Activated naive CD4-positive, alpha-beta T cell treated with anti-CD3 and anti-CD28 coated beads for 36 hours (primary cell): ENCODE measurements at regions of chr1 and their contacts with region 1.

Region 1: GRCh38 chr1:54614024-54614423 is 9.3 kb downstream of the FAM151A start:
- DNase-seq: no peak
- H3K4me3 Mint-ChIP-seq: no peak overlapping the region
- H3K27ac Mint-ChIP-seq: no peak overlapping the region
- H3K4me1 Mint-ChIP-seq: no peaks in the 10 kb centered on the region
- H3K27me3 Mint-ChIP-seq: no peaks in the 10 kb centered on the region

Region 2: DNA sequence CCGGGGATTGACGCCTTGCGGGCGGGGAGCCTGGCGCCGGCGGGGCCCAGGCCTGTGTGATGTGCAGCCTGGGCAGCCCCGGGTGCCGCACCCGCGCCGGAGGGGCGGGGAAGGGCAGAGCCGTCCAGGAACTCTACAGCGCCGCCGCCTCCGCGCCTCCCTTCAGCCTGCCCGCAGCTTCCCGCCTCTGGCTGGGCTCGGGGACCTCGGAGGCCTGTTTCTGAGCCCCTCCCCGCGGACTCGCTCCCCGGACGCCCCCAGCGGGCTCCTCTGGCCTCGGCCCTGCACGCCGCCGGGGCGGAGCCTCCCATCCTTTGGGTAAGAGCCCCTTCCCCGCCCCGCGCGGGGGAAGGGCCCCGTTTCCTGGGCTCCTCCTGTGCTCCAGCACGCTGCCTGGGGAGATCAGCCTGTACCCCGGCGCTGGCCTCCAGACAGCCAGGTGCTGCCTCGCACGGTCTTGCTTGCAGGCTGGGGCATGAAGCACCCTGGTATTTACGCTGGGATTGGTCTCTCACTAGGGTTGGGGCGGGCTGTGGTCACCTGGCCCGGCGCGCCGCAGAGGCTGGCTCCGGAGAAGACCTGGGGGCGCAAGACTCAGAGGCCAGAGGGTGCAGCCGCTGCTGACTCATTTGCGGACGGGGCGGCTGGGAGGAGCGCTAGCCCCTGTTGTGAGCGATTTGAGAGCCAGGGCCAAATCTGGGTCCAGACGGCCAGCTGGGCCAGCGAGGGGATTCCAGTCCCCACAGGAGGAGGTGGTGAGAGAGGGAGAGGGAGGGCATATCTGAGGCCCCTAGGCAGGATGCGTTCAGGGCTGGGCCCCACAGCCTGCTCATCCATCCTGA is 71.7 kb before region 1 on chr1:
- CTCF ChIA-PET with region 1: no interaction called
- intact Hi-C with region 1: loop called (anchors 1 kb)
- DNase-seq: peak; percentile 85
- H3K4me3 Mint-ChIP-seq: peak overlapping the region; percentile 70
- H3K27ac Mint-ChIP-seq: no peak overlapping the region
- H3K4me1 Mint-ChIP-seq: peaks cover 11% of the 10 kb centered on the region
- H3K27me3 Mint-ChIP-seq: no peaks in the 10 kb centered on the region

Region 3: GRCh38 chr1:55519937-55520683 is 906.1 kb after region 1 on chr1:
- CTCF ChIA-PET with region 1: no interaction called
- intact Hi-C with region 1: no loop called
- DNase-seq: no peak
- H3K4me3 Mint-ChIP-seq: no peak overlapping the region
- H3K27ac Mint-ChIP-seq: no peak overlapping the region
- H3K4me1 Mint-ChIP-seq: no peaks in the 10 kb centered on the region
- H3K27me3 Mint-ChIP-seq: peaks cover 6% of the 10 kb centered on the region